ENCODE measurements at regions of chr1 and their contacts with region 1.

Region 1: DNA sequence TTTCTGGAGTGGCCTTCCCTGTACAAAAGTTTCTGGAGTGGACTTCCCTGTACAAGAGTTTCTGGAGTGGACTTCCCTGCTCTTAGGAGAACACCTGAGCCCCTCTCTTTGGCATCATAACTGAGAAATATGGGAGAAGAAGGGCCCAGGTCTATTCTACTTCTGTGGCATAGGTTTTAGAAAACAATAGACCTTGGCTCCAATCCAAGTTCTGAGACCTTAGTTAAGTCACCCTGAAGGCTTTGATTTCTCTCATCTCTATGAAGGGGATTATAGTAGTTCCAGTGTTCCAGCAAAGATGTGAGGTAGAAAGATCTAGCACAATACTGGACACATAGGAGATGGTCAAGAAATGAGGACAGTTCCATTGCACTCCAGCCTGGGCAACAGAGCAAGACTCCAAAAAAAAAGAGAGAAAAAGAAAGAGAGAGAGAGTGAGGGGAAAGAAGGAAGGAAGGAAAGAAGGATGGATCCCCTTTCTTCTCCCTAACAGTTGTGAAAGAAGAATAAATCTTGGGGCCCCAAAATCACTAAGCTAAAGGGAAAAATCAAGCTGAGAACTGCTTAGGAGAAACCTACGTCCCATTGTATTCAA is 13.3 kb upstream of the EIF4G3 start:
- DNase-seq: no peak
- H3K4me3 ChIP-seq: no peak overlapping the region
- H3K27ac ChIP-seq: no peak overlapping the region
- H3K4me1 ChIP-seq: no peaks in the 10 kb centered on the region
- H3K27me3 ChIP-seq: no peaks in the 10 kb centered on the region
- CTCF ChIP-seq: no peak

Region 2: DNA sequence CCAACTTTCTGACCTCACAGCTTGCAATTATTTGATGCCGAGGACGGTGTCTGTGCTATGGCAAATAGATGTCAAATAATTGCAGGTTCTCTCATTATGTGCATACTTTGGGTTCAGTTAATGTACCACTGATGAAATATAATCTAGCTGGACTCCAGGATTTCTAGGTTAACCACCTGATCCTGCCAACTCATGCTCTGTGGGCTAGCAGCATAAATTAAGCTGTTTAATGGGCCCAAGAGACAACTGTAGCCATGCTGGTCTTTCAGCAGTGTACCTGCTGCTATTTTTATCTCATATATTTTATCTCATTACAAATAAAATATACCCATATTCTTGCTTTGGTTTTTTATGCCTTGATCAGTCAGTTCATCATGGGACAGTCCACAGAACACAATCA is 359.6 kb before region 1 on chr1:
- CTCF ChIA-PET with region 1: no interaction called
- POLR2A ChIA-PET with region 1: interaction called, 13 read pairs
- intact Hi-C with region 1: no loop called
- DNase-seq: no peak
- H3K4me3 ChIP-seq: no peak overlapping the region
- H3K27ac ChIP-seq: no peak overlapping the region
- H3K4me1 ChIP-seq: no peaks in the 10 kb centered on the region
- H3K27me3 ChIP-seq: no peaks in the 10 kb centered on the region
- CTCF ChIP-seq: no peak

Region 3: GRCh38 chr1:20847611-20848080 is 342.4 kb before region 1 on chr1:
- CTCF ChIA-PET with region 1: no interaction called
- POLR2A ChIA-PET with region 1: no interaction called
- intact Hi-C with region 1: loop called (anchors 10 kb)
- DNase-seq: peak in 1 of 2 experiments; percentile 65
- H3K4me3 ChIP-seq: no peak overlapping the region
- H3K27ac ChIP-seq: no peak overlapping the region
- H3K4me1 ChIP-seq: 0 out of 2 replicates have a peak, but pooled peaks cover 9% of the 10 kb centered on the region
- H3K27me3 ChIP-seq: no peaks in the 10 kb centered on the region
- CTCF ChIP-seq: no peak